Ascending aorta (tissue), 2 donors: ENCODE measurements at regions of chr17 and their contacts with region 1.

Region 1: DNA sequence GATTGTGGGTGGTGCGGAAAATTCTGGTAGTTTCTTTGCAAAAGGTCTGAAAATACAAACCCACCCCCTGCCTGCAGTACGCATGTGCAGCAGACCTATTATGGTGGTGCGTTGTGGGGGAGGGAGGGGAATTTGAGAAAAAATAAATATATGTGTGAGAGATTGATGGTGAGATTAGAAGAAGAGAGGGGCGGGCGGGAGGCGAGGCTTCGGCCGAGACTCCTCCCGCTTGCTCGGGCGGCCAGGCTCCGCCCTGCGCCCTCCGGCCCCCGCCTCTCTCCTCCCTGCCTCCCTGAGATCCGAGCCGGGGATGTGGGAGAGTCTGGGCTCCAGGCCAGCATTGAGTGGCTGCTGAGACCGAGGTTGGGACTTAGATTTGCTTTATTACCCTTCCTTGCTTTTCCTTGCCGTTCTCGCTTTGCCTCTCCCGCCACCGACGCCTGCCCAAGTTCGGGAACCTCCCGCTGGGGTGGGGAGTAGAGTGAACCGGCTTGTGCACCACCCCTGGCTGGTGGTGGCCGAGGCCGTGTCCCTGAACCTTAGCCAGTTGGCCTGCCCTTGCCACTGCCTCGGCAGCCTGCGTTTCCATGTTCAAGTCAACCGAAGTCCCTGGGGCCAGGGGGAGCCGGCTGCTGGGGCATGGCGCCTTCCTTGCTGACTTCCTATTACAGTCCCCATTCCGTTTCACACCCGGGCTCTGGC is 956 bp upstream of the CHD3 start:
- DNase-seq: peak; percentile 65 to 95
- H3K4me3 ChIP-seq: peak overlapping the region; percentile 77 to 95
- H3K27ac ChIP-seq: peak overlapping the region; percentile 90 to 91
- H3K4me1 ChIP-seq: peaks cover 19 to 28% of the 10 kb centered on the region in 2 donors
- H3K27me3 ChIP-seq: no peaks in the 10 kb centered on the region
- CTCF ChIP-seq: no peak

Region 2: GRCh38 chr17:7834962-7835813 is 52.4 kb before region 1 on chr17:
- intact Hi-C with region 1: loop called (anchors 2 kb)
- DNase-seq: peak; percentile 93 to 99
- H3K4me3 ChIP-seq: peak overlapping the region; percentile 68 to 80
- H3K27ac ChIP-seq: peak overlapping the region; percentile 91 to 98
- H3K4me1 ChIP-seq: peaks cover 8 to 29% of the 10 kb centered on the region in 2 donors
- H3K27me3 ChIP-seq: no peaks in the 10 kb centered on the region
- CTCF ChIP-seq: peak; percentile 82 to 94 (median 85)

Region 3: GRCh38 chr17:7856883-7857723 is 30.5 kb before region 1 on chr17 and contains the start of gene NAA38:
- intact Hi-C with region 1: loop called (anchors 1 kb)
- DNase-seq: peak; percentile 92 to 99
- H3K4me3 ChIP-seq: peak within 1 kb of the TSS; percentile 73 to 76
- H3K27ac ChIP-seq: peak within 1 kb of the TSS; percentile 87 to 88
- H3K4me1 ChIP-seq: peaks cover 9 to 25% of the 10 kb centered on the region in 2 donors
- H3K27me3 ChIP-seq: no peaks in the 10 kb centered on the region
- CTCF ChIP-seq: peak; percentile 39 to 55 (median 51)
- total RNA-seq, gene NAA38: 59.0 TPM

Region 4: DNA sequence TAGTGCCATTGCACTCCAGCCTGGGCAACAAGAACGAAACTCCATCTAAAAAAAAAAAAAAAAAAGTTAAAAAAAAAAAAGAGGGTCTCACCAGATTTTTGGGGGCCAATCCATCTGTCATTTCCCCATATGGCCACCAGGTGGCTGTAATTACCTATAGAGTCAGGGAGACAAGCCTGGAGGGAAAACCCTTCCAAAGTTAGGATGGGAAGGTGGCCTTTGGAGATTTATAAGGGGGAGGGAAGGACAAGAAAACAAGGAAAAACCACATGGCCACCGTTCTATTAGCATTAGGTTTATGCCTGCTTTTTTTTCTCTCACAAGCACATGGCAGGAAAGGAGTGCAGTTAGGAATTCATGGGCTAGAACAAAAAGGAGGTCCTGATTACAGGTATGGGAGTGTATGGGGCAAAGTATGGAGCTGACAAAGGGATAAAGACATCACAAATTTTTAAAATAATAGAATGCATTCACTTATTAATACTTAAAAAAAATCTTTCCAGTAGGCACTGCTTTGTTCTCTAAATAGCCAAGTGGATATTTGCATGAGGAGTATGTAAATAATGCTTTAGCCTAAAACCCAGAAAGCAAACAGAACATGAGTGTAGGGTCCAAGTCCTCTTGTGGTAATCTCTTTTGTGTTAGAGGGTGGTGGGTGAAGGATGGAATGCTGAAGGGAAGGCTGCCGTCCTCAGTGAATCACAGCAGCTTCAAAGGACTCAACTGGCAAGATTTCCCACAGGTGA is 24.8 kb before region 1 on chr17:
- intact Hi-C with region 1: loop called (anchors 2 kb)
- DNase-seq: no peak
- H3K4me3 ChIP-seq: no peak overlapping the region
- H3K27ac ChIP-seq: no peak overlapping the region
- H3K4me1 ChIP-seq: peaks cover 0 to 10% of the 10 kb centered on the region in 2 donors
- H3K27me3 ChIP-seq: no peaks in the 10 kb centered on the region
- CTCF ChIP-seq: peak; percentile 76 to 83 (median 76)

Region 5: GRCh38 chr17:7873051-7873450 is 14.6 kb before region 1 on chr17:
- intact Hi-C with region 1: no loop called
- DNase-seq: no peak
- H3K4me3 ChIP-seq: no peak overlapping the region
- H3K27ac ChIP-seq: no peak overlapping the region
- H3K4me1 ChIP-seq: no peaks in the 10 kb centered on the region
- H3K27me3 ChIP-seq: no peaks in the 10 kb centered on the region
- CTCF ChIP-seq: no peak

Region 6: DNA sequence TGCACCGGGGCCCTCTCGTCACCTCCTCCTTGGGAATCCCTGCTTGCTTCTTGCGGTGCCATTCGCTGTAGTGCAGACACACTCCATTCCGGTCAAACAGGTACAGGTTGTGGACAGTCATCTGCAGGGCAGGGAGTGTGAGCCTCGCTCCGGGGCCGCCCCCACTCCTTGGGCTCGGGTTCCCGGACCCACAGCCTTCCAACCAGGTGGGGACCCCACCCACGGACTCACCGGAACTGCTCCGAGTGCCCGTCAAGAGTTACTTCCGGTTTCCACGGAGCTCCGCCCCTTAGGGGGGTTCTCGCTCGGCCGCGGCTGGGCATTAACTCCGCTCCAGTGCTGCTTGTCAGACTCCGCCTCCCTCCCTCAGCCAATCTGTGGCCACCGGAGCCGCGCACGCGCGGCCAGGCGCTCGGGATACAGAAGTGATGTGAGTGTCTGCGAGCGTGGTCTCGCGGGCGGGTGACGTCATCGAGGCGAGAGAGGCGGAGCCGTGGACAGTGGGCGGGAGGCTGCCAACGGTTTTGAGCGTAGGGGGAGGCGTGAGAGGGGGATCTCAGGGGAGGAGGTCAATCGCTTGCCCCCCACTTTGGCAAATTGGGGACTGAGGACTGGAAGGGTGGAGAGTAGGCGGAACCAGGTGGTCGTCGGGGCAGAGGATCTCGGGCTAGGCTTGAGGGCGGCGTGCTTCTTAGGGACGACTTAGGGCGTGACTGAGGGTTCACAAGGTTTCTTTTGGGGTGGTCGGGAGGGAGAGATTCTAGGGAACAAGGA is 44.3 kb after region 1 on chr17 and contains the starts of genes CNTROB and TRAPPC1:
- intact Hi-C with region 1: loop called (anchors 1 kb)
- DNase-seq: peak; percentile 100
- H3K4me3 ChIP-seq: peak within 1 kb of the TSS; percentile 76 to 84
- H3K27ac ChIP-seq: peak within 1 kb of the TSS; percentile 27 to 57
- H3K4me1 ChIP-seq: peaks cover 12 to 18% of the 10 kb centered on the region in 2 donors
- H3K27me3 ChIP-seq: no peaks in the 10 kb centered on the region
- CTCF ChIP-seq: no peak
- total RNA-seq, gene CNTROB: 13.7 TPM
- total RNA-seq, gene TRAPPC1: 36.0 TPM